ENCODE measurements at regions of chr5 and their contacts with region 1.

Region 1: GRCh38 chr5:142713121-142713706 is 27.3 kb upstream of the FGF1 start:
- DNase-seq: peak; percentile 89
- ATAC-seq: peak; percentile 100
- H3K4me3 Mint-ChIP-seq: peak overlapping the region; percentile 62
- H3K27ac Mint-ChIP-seq: no peak overlapping the region
- H3K4me1 Mint-ChIP-seq: peaks cover 8% of the 10 kb centered on the region
- H3K27me3 Mint-ChIP-seq: peaks cover 6% of the 10 kb centered on the region

Region 2: GRCh38 chr5:142726188-142726731 is 13.0 kb after region 1 on chr5:
- CTCF ChIA-PET with region 1: interaction called, 31 read pairs
- DNase-seq: no peak
- ATAC-seq: no peak
- H3K4me3 Mint-ChIP-seq: no peak overlapping the region
- H3K27ac Mint-ChIP-seq: no peak overlapping the region
- H3K4me1 Mint-ChIP-seq: peaks cover 8% of the 10 kb centered on the region
- H3K27me3 Mint-ChIP-seq: no peaks in the 10 kb centered on the region

Region 3: GRCh38 chr5:142769741-142770631 is 56.8 kb after region 1 on chr5 and contains the start of gene ARHGAP26:
- CTCF ChIA-PET with region 1: interaction called, 16 read pairs
- DNase-seq: peak; percentile 97
- ATAC-seq: peak; percentile 94
- H3K4me3 Mint-ChIP-seq: peak within 1 kb of the TSS; percentile 89
- H3K27ac Mint-ChIP-seq: peak within 1 kb of the TSS; percentile 88
- H3K4me1 Mint-ChIP-seq: peaks cover 37% of the 10 kb centered on the region
- H3K27me3 Mint-ChIP-seq: no peaks in the 10 kb centered on the region
- total RNA-seq, gene ARHGAP26: 12.6 to 38.9 TPM

Region 4: DNA sequence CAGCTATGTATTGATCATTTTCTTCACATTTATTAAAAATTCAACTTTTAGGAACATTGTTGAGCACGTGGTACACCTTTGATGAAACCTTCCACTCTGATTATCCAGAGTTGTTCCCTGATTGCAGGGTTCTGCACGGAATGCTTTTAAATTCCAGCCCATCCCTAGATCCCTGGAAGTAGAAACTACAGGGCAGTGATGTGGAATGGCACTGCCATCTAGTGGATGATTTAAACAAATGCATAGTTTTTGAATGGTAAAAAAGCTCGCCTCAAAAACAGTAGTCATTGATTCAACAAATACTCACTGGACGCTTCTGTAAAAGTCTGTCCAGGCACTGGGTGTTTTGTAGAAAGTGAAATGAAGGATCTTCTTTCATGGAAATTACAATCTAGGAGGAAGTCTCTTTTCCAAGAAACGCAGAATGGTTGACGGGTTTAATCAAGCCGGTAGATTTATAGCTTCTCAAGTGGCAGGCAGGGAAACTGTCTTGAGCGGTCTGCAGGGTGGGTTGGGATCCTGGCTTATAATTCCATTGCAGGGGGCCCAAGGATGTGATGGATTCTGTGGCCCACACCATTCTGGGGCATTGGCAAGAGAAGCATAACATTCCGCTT is 175.4 kb after region 1 on chr5:
- CTCF ChIA-PET with region 1: interaction called, 349 read pairs
- DNase-seq: no peak
- ATAC-seq: no peak
- H3K4me3 Mint-ChIP-seq: no peak overlapping the region
- H3K27ac Mint-ChIP-seq: no peak overlapping the region
- H3K4me1 Mint-ChIP-seq: peaks cover 8% of the 10 kb centered on the region
- H3K27me3 Mint-ChIP-seq: no peaks in the 10 kb centered on the region

Measured in activated CD8-positive, alpha-beta memory T cell treated with anti-CD3 and anti-CD28 coated beads, Interleukin-2, amount 10 ng/mL, durations not matched to agents 7 days and 5 days (primary cell).